ENCODE measurements at regions of chr1 and their contacts with region 1.

Region 1: GRCh38 chr1:151008190-151008860 is at the start of gene PRUNE1:
- DNase-seq: peak; percentile 96 to 99
- ATAC-seq: peak; percentile 87 to 97 (median 93)
- H3K4me3 ChIP-seq: peak within 1 kb of the TSS; percentile 73
- H3K4me3 Mint-ChIP-seq: peak within 1 kb of the TSS; percentile 94
- H3K27ac ChIP-seq: peak within 1 kb of the TSS; percentile 95
- H3K27ac Mint-ChIP-seq: peak within 1 kb of the TSS; percentile 95 to 96
- H3K4me1 ChIP-seq: peaks cover 50% of the 10 kb centered on the region
- H3K4me1 Mint-ChIP-seq: peaks cover 53 to 61% of the 10 kb centered on the region in 2 donors
- H3K27me3 ChIP-seq: no peaks in the 10 kb centered on the region
- H3K27me3 Mint-ChIP-seq: no peaks in the 10 kb centered on the region
- CTCF ChIP-seq: no peak
- total RNA-seq, gene PRUNE1: 11.4 to 14.1 (median 13.5) TPM

Region 2: DNA sequence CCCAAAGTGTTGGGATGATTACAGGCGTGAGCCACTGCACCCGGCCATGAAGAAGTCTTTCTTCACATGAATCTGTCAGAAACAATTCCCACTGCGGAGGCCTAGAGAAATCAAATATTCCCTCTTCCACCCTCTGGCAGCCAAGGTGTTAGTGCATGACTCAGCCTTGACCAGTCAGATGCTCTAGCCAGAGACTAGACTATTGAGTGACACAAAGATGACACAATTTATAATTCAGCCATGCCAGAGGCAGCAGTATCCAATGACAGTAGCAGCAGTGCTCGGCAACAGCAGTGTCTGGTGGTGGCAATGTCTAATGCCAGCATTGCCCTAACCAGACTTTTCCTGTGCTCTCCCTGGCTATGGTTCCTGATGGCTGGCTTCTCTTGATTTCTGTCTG is 112.7 kb before region 1 on chr1:
- intact Hi-C with region 1: no loop called
- DNase-seq: no peak
- ATAC-seq: no peak
- H3K4me3 ChIP-seq: no peak overlapping the region
- H3K4me3 Mint-ChIP-seq: no peak overlapping the region
- H3K27ac ChIP-seq: no peak overlapping the region
- H3K27ac Mint-ChIP-seq: no peak overlapping the region
- H3K4me1 ChIP-seq: peaks cover 2% of the 10 kb centered on the region
- H3K4me1 Mint-ChIP-seq: peaks cover 5 to 11% of the 10 kb centered on the region in 2 donors
- H3K27me3 ChIP-seq: no peaks in the 10 kb centered on the region
- H3K27me3 Mint-ChIP-seq: peaks cover 0 to 7% of the 10 kb centered on the region in 2 donors
- CTCF ChIP-seq: no peak

Region 3: GRCh38 chr1:150931773-150932172 is 76.6 kb before region 1 on chr1:
- intact Hi-C with region 1: no loop called
- DNase-seq: peak in 1 of 2 donors; percentile 13
- ATAC-seq: no peak
- H3K4me3 ChIP-seq: no peak overlapping the region
- H3K4me3 Mint-ChIP-seq: no peak overlapping the region
- H3K27ac ChIP-seq: no peak overlapping the region
- H3K27ac Mint-ChIP-seq: no peak overlapping the region
- H3K4me1 ChIP-seq: peaks cover 5% of the 10 kb centered on the region
- H3K4me1 Mint-ChIP-seq: peaks cover 11 to 25% of the 10 kb centered on the region in 2 donors
- H3K27me3 ChIP-seq: no peaks in the 10 kb centered on the region
- H3K27me3 Mint-ChIP-seq: no peaks in the 10 kb centered on the region
- CTCF ChIP-seq: no peak

Region 4: GRCh38 chr1:151047925-151048645 is 39.8 kb after region 1 on chr1:
- intact Hi-C with region 1: loop called (anchors 2 kb)
- DNase-seq: peak; percentile 54 to 84
- ATAC-seq: peak; percentile 66 to 86 (median 70)
- H3K4me3 ChIP-seq: peak overlapping the region; percentile 93
- H3K4me3 Mint-ChIP-seq: peak overlapping the region; percentile 96
- H3K27ac ChIP-seq: peak overlapping the region; percentile 87
- H3K27ac Mint-ChIP-seq: peak overlapping the region; percentile 98 to 99
- H3K4me1 ChIP-seq: peaks cover 25% of the 10 kb centered on the region
- H3K4me1 Mint-ChIP-seq: peaks cover 56 to 57% of the 10 kb centered on the region in 2 donors
- H3K27me3 ChIP-seq: no peaks in the 10 kb centered on the region
- H3K27me3 Mint-ChIP-seq: no peaks in the 10 kb centered on the region
- CTCF ChIP-seq: peak; percentile 50

Measured in natural killer cell (primary cell).